PC-9 (cell line): ENCODE measurements at regions of chr5 and their contacts with region 1.

Region 1: GRCh38 chr5:138936225-138936967 is 61.3 kb upstream of the LRRTM2 start:
- DNase-seq: no peak
- H3K4me3 ChIP-seq: no peak overlapping the region
- H3K27ac ChIP-seq: no peak overlapping the region
- H3K4me1 ChIP-seq: no peaks in the 10 kb centered on the region
- H3K27me3 ChIP-seq: no peaks in the 10 kb centered on the region
- CTCF ChIP-seq: no peak

Region 2: DNA sequence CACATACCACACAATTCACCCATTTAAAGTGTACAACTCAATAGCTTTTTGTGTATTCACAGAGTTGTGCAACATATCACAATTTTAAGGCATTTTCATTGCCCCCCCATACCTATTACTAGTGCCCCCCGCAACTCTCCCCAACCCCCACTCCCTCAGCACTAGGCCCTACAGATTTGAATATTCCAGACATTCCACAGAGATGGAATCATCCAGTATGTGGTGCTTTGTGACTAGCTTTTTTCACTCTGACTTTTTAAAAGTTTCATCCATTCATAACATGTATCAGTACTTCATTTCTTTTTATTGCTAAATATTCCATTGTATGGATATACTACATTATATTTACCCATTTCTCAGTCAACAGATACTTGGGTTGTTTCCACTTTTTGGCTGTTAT is 41.7 kb after region 1 on chr5:
- CTCF ChIA-PET with region 1: no interaction called
- POLR2A ChIA-PET with region 1: interaction called, 30 read pairs
- intact Hi-C with region 1: no loop called
- DNase-seq: no peak
- H3K4me3 ChIP-seq: no peak overlapping the region
- H3K27ac ChIP-seq: no peak overlapping the region
- H3K4me1 ChIP-seq: no peaks in the 10 kb centered on the region
- H3K27me3 ChIP-seq: no peaks in the 10 kb centered on the region
- CTCF ChIP-seq: no peak